PC-9 (cell line): ENCODE measurements at regions of chr11 and their contacts with region 1.

Region 1: DNA sequence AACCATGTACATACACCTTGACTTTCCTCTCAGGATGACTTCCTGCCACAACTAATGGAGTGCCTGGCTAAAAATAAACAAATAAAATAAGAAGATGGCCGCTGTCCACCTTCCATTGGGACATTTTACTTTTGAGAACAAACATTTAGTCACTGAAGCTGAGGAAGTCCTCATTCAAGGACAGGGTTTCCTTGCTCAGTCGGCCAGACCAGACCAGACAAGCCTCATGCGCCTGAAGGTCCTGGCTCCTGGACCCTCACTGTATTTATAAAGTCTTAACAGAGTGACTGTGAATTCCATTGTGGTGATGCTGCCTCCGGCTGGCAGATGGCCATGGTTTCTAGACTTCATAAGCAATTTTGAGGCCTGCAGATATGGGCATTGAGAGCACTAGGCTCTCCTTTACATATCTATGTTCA is 114.5 kb downstream of the MAML2 start:
- DNase-seq: peak; percentile 63 to 83
- H3K4me3 ChIP-seq: no peak overlapping the region
- H3K27ac ChIP-seq: peak overlapping the region; percentile 48
- H3K4me1 ChIP-seq: peaks cover 30% of the 10 kb centered on the region
- H3K27me3 ChIP-seq: no peaks in the 10 kb centered on the region
- CTCF ChIP-seq: no peak

Region 2: DNA sequence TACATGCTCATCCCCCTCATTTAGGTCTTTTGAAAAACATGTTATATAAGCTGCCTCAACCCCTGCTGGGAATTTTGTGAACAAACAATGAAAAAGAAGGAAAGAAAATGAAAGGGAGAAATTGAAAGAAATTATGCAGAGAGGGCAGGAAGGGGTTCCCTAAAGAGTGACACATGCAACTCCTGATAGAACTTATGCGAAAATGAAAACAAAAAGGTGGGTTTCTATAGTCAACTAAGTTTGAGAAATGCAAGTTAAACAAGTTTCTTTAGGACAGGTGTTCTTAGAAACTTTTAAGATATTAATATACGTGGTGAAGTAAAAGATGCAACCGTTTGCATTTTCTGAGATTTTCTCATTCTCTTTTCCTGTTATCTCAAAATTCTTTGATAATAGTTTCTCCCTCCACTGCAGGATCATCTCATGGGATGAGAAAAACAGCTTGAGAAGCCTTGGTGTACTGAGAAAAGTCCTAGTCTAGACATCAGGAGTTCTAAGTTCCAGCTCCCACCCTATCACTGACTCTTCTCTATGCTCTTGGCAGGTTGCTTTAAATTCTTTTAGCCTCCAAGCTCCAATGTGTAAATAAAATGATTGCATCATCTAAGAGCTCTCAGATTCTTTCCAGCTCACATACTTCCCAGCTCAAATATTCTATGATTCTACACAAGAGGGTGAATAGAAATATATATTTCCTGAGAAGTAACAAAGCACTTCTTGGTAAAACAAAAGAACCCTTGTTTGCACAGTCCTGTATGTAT is 548.1 kb before region 1 on chr11:
- CTCF ChIA-PET with region 1: no interaction called
- POLR2A ChIA-PET with region 1: interaction called, 10 read pairs
- intact Hi-C with region 1: no loop called
- DNase-seq: no peak
- H3K4me3 ChIP-seq: no peak overlapping the region
- H3K27ac ChIP-seq: no peak overlapping the region
- H3K4me1 ChIP-seq: no peaks in the 10 kb centered on the region
- H3K27me3 ChIP-seq: no peaks in the 10 kb centered on the region
- CTCF ChIP-seq: no peak

Region 3: GRCh38 chr11:95751515-95751914 is 477.0 kb before region 1 on chr11:
- CTCF ChIA-PET with region 1: no interaction called
- POLR2A ChIA-PET with region 1: no interaction called
- intact Hi-C with region 1: no loop called
- DNase-seq: no peak
- H3K4me3 ChIP-seq: no peak overlapping the region
- H3K27ac ChIP-seq: no peak overlapping the region
- H3K4me1 ChIP-seq: no peaks in the 10 kb centered on the region
- H3K27me3 ChIP-seq: peaks cover 9% of the 10 kb centered on the region; the same call in 1 of the 2 replicates
- CTCF ChIP-seq: no peak

Region 4: DNA sequence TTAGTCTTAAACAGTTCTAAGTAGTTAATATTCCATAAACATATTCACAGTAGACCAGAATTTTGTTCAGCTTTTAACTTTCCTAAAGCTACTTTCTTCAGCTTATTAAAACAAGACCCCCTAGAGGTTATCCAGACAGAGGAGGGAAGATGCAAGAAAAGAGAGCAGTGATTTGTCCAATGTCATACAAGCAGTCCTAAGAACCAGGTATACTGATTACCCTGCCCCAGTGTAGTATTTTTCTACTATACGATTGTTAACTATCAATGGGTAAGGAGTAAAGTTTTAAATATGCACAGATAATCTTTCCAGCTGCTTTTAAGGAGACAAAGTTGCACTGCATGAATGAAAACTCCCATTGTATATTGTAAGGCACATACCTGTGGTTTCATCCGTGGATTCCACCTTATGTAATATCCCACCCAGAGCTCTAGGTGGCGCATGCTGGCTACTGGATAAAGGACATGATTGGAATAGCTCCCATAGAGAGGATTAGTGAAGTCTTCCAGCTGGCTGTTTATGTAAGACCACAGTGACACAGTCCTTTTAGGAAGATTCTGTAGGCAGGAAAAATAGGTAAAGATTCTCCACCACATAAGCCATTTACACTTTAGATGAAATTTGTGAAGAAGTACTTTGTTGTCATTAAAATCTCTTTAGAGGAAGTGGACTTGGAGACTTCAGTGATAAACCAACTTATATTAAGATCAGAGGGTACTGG is 392.6 kb before region 1 on chr11:
- CTCF ChIA-PET with region 1: no interaction called
- POLR2A ChIA-PET with region 1: no interaction called
- intact Hi-C with region 1: loop called (anchors 10 kb)
- DNase-seq: peak; percentile 76 to 89
- H3K4me3 ChIP-seq: no peak overlapping the region
- H3K27ac ChIP-seq: peak overlapping the region; percentile 38
- H3K4me1 ChIP-seq: no peaks in the 10 kb centered on the region
- H3K27me3 ChIP-seq: no peaks in the 10 kb centered on the region
- CTCF ChIP-seq: peak; percentile 97

Region 5: GRCh38 chr11:96054870-96055705 is 173.4 kb before region 1 on chr11:
- CTCF ChIA-PET with region 1: interaction called, 10 read pairs
- POLR2A ChIA-PET with region 1: no interaction called
- intact Hi-C with region 1: no loop called
- DNase-seq: peak in 1 of 2 experiments; percentile 50
- H3K4me3 ChIP-seq: no peak overlapping the region
- H3K27ac ChIP-seq: peak overlapping the region; percentile 47
- H3K4me1 ChIP-seq: peaks cover 64% of the 10 kb centered on the region
- H3K27me3 ChIP-seq: no peaks in the 10 kb centered on the region
- CTCF ChIP-seq: peak; percentile 79

Region 6: GRCh38 chr11:96188243-96189006 is 40.1 kb before region 1 on chr11:
- CTCF ChIA-PET with region 1: no interaction called
- POLR2A ChIA-PET with region 1: no interaction called
- intact Hi-C with region 1: loop called (anchors 5 kb)
- DNase-seq: peak in 1 of 2 experiments; percentile 86
- H3K4me3 ChIP-seq: peak overlapping the region; percentile 8; the same call in 1 of the 2 replicates
- H3K27ac ChIP-seq: peak overlapping the region; percentile 91
- H3K4me1 ChIP-seq: peaks cover 52% of the 10 kb centered on the region
- H3K27me3 ChIP-seq: no peaks in the 10 kb centered on the region
- CTCF ChIP-seq: no peak

Region 7: DNA sequence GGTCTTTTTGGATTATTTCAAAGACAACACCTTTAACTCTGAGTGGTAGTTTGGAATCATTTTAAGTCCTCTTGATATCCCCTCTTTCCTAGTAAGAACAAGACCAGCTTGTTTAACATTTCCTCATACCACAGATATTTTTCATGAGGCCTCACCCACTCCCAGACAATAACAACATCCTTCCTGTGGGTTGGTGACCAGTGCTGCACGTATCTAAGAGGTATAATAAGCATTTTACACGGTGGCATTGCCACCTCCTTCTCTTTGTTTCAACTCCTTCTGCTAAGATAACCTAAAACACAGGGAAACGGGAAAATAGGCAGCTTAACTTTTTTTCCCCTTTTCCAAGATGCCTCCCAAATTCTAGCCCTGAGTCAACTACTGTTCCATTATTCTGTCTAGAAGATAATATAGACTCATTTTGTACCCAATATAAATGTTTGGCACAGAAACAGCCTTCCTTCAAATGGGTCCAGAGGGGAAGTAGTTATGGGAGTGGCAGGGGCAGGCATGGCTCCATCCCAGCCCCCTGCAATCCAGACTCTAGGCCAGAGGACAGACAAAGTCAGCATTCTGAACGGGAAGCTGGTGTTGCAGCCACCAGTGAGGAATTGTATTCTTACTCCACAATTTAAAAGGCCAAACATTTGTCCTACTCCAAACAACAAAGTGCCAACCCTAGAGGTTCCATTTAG is 86.0 kb after region 1 on chr11:
- CTCF ChIA-PET with region 1: no interaction called
- POLR2A ChIA-PET with region 1: no interaction called
- intact Hi-C with region 1: loop called (anchors 5 kb)
- DNase-seq: peak; percentile 69 to 100
- H3K4me3 ChIP-seq: peak overlapping the region; percentile 41
- H3K27ac ChIP-seq: peak overlapping the region; percentile 96
- H3K4me1 ChIP-seq: peaks cover 100% of the 10 kb centered on the region
- H3K27me3 ChIP-seq: no peaks in the 10 kb centered on the region
- CTCF ChIP-seq: no peak